ENCODE measurements at regions of chr17 and their contacts with region 1.

Region 1: DNA sequence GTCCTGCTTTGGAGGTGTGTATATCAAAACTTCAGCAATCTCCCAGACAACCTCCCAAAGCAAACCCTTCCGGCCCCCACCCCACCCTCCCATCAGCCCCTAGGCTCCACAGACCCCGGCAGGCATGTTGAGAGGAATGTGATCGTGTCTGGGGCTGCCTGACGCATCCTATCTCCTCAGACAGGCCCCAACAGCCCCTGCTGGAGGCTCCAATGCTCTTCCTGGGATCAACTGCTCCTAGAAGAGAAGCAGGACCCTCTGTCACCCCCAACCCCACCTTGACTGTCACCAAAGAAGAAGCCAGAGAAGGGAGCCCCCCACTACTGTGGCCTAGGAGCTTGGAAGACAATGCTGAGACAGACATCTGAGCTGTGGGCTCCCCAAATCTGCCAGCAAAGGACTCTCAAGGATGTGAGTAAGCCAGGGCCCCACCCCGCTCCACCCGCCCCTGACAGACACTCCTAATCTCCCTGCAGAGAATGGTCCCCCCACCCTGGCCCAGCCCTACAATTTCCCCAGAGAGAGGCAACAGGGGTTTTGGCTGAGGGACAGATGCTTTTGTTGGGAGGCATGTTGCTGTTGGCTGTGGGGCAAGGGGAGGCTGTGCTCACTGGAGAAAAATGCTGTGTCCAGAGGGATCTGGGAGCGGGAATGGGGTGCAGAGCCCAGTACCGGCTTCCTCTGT is 1.6 kb upstream of the KRT14 start:
- DNase-seq: peak; percentile 69
- H3K4me3 ChIP-seq: no peak overlapping the region
- H3K27ac ChIP-seq: peak overlapping the region; percentile 82
- H3K4me1 ChIP-seq: peaks cover 29% of the 10 kb centered on the region
- H3K27me3 ChIP-seq: no peaks in the 10 kb centered on the region
- CTCF ChIP-seq: peak in 1 of 2 donors; percentile 19

Region 2: GRCh38 chr17:41530062-41531051 is 57.9 kb before region 1 on chr17:
- CTCF ChIA-PET with region 1: no interaction called
- dilution Hi-C with region 1: loop called (anchors 5 kb)
- in situ Hi-C with region 1: no loop called
- intact Hi-C with region 1: no loop called
- DNase-seq: peak; percentile 91
- H3K4me3 ChIP-seq: no peak overlapping the region
- H3K27ac ChIP-seq: peak overlapping the region; percentile 67
- H3K4me1 ChIP-seq: peaks cover 27% of the 10 kb centered on the region
- H3K27me3 ChIP-seq: no peaks in the 10 kb centered on the region
- CTCF ChIP-seq: no peak

Region 3: GRCh38 chr17:41615454-41615853 is 27.2 kb after region 1 on chr17:
- CTCF ChIA-PET with region 1: interaction called, 4 read pairs
- dilution Hi-C with region 1: no loop called
- in situ Hi-C with region 1: loop called in 1 of 2 experiments (anchors 5 kb)
- intact Hi-C with region 1: loop called (anchors 1 kb)
- DNase-seq: peak; percentile 95
- H3K4me3 ChIP-seq: no peak overlapping the region
- H3K27ac ChIP-seq: no peak overlapping the region
- H3K4me1 ChIP-seq: peaks cover 41% of the 10 kb centered on the region
- H3K27me3 ChIP-seq: no peaks in the 10 kb centered on the region
- CTCF ChIP-seq: peak; percentile 15 to 31